CD4-positive, alpha-beta memory T cell (primary cell): ENCODE measurements at regions of chr12 and their contacts with region 1.

Region 1: GRCh38 chr12:122860346-122861090 is 25.3 kb downstream of the HIP1R start:
- DNase-seq: peak; percentile 68 to 79 (median 73)
- H3K4me3 ChIP-seq: no peak overlapping the region
- H3K4me3 Mint-ChIP-seq: no peak overlapping the region
- H3K27ac ChIP-seq: no peak overlapping the region
- H3K27ac Mint-ChIP-seq: peak overlapping the region in 4 of 7 donors; percentile 10 to 71 (median 30)
- H3K4me1 ChIP-seq: peaks cover 5% of the 10 kb centered on the region
- H3K4me1 Mint-ChIP-seq: peaks cover 0 to 5% (median 0%) of the 10 kb centered on the region in 4 donors
- H3K27me3 ChIP-seq: no peaks in the 10 kb centered on the region
- H3K27me3 Mint-ChIP-seq: no peaks in the 10 kb centered on the region

Region 2: GRCh38 chr12:122793685-122794106 is 66.8 kb before region 1 on chr12:
- CTCF ChIA-PET with region 1: interaction called, 51 read pairs
- POLR2A ChIA-PET with region 1: interaction called, 8 read pairs
- intact Hi-C with region 1: loop called (anchors 1 kb)
- DNase-seq: peak in 4 of 5 donors; percentile 55 to 60 (median 58)
- H3K4me3 ChIP-seq: no peak overlapping the region
- H3K4me3 Mint-ChIP-seq: peak overlapping the region in 1 of 8 donors; percentile 29
- H3K27ac ChIP-seq: no peak overlapping the region
- H3K27ac Mint-ChIP-seq: no peak overlapping the region
- H3K4me1 ChIP-seq: peaks cover 3% of the 10 kb centered on the region
- H3K4me1 Mint-ChIP-seq: peaks cover 0 to 5% (median 4%) of the 10 kb centered on the region in 4 donors
- H3K27me3 ChIP-seq: no peaks in the 10 kb centered on the region
- H3K27me3 Mint-ChIP-seq: no peaks in the 10 kb centered on the region

Region 3: GRCh38 chr12:122834104-122834920 is 26.2 kb before region 1 on chr12:
- CTCF ChIA-PET with region 1: interaction called, 4 read pairs
- POLR2A ChIA-PET with region 1: interaction called, 9 read pairs
- intact Hi-C with region 1: loop called (anchors 2 kb)
- DNase-seq: peak in 4 of 5 donors; percentile 21 to 31 (median 26)
- H3K4me3 ChIP-seq: peak overlapping the region; percentile 23 to 63
- H3K4me3 Mint-ChIP-seq: peak overlapping the region; percentile 91 to 96 (median 94)
- H3K27ac ChIP-seq: no peak overlapping the region
- H3K27ac Mint-ChIP-seq: peak overlapping the region; percentile 84 to 97 (median 93)
- H3K4me1 ChIP-seq: peaks cover 30% of the 10 kb centered on the region
- H3K4me1 Mint-ChIP-seq: peaks cover 24 to 45% (median 38%) of the 10 kb centered on the region in 4 donors
- H3K27me3 ChIP-seq: no peaks in the 10 kb centered on the region
- H3K27me3 Mint-ChIP-seq: no peaks in the 10 kb centered on the region

Region 4: DNA sequence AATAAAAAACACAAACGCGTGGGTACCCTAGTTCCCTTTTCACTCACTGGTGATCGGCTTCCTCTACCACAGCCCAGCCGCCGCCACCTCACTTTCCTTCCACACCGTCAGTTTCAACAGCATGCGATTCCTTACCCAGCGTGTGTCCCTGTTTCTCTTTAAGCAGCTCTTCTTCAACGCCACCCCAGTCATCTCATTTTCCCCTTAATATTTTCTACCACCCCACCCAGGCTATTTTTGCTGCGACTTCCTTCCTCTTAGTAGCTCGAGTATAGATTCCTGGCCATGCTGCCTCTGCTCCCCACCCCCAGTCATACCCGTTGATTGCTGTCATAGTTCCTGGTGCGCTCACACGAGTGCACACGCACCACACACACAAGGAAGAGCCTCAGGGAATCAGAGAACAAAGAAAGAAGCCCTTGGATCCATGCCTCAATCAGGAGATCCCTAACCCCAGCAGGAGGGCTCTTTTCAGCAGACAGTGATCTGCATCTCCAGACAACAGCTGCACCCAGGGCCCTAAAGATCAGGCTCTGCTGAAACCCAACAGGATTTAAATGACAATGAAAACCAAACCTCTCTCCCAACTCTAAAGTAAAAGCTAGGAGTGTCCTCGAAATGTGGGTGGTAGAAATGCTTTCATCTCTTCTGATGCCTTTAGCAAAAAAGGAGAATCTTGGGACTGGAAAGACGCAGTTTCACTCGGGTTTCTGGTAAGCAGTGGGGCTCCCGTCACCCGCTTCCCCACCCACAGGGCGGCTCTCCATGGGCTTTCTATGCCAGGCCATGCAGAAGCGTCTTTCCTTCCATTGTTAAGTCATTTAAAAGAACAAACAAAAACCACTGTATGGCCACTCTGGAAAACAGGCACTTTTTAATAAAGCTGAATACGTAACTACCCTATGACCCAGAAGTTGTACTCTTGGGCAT is 11.6 kb after region 1 on chr12:
- CTCF ChIA-PET with region 1: interaction called, 72 read pairs
- POLR2A ChIA-PET with region 1: interaction called, 22 read pairs
- intact Hi-C with region 1: no loop called
- DNase-seq: peak in 3 of 5 donors; percentile 34 to 40 (median 39)
- H3K4me3 ChIP-seq: peak overlapping the region; percentile 25 to 41
- H3K4me3 Mint-ChIP-seq: peak overlapping the region; percentile 84 to 94 (median 91)
- H3K27ac ChIP-seq: peak overlapping the region; percentile 47
- H3K27ac Mint-ChIP-seq: peak overlapping the region; percentile 62 to 97 (median 94)
- H3K4me1 ChIP-seq: peaks cover 70% of the 10 kb centered on the region
- H3K4me1 Mint-ChIP-seq: peaks cover 48 to 82% (median 63%) of the 10 kb centered on the region in 4 donors
- H3K27me3 ChIP-seq: no peaks in the 10 kb centered on the region
- H3K27me3 Mint-ChIP-seq: no peaks in the 10 kb centered on the region

Region 5: DNA sequence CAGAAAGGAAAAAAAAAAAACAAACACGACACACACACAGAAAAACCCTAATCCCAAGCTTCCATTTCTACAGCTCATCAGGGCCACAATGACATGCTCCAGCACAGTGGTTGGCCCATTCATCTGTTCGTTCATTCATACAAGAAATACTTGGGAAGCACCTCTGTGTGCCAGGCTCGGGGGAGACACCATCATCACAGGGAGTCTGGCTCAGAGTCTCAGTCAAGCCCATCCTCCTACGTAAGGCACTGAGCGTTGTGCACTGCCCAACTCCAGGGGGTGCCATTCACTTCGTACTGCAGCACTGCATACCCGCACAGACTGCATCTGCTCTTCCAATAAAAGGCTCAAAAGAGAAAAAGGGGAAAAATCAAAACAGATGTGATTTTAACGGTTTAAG is 20.1 kb after region 1 on chr12:
- CTCF ChIA-PET with region 1: interaction called, 72 read pairs
- POLR2A ChIA-PET with region 1: interaction called, 5 read pairs
- intact Hi-C with region 1: no loop called
- DNase-seq: no peak
- H3K4me3 ChIP-seq: no peak overlapping the region
- H3K4me3 Mint-ChIP-seq: peak overlapping the region in 3 of 8 donors; percentile 11 to 27 (median 20)
- H3K27ac ChIP-seq: no peak overlapping the region
- H3K27ac Mint-ChIP-seq: peak overlapping the region; percentile 41 to 87 (median 80)
- H3K4me1 ChIP-seq: peaks cover 86% of the 10 kb centered on the region
- H3K4me1 Mint-ChIP-seq: peaks cover 51 to 94% (median 74%) of the 10 kb centered on the region in 4 donors
- H3K27me3 ChIP-seq: no peaks in the 10 kb centered on the region
- H3K27me3 Mint-ChIP-seq: no peaks in the 10 kb centered on the region

Region 6: DNA sequence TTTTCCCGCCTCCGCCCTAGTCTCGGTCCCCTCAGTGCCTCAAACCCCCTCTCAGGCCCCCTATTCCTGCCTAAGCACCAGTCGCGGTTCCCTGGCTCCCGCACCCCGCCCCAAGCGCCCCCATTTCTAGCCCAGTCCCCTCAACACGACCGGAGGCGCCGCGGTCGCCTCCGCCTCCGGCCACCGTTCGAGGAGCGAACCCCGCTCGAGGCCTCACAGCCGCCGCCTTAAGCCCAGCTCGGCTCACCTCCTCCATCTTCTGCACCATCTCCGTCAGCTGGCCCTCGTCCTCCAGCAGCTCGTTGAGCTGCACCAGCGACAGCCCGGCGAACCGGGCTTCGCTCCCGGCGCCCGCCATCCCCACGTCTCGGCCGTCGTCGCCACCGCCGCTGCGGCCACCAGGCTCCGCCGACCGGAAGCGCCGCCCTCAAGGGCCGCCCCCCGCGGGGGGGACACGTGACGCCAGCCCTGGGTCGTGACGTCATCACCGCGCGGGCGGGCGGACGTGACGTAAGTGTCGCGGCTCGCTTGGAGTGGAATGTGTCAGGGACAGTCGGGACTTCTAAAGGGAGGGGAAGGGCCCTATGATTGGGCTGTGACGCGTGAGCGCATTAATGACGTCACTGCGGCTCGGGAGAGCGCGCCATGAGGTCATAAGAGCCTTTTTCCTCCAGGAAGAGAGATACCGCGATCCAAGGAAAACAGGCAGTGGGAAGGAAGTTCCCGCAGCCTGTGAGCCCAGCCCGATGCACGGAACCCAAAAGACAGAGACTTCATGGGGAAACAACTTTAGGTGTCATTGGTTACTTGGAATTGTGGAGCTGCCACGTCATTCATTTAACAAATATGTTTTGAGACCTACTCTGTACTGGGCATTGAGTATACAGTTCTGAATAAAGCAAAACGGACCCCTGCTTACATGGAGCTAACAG is 35.5 kb after region 1 on chr12 and contains the start of gene VPS37B:
- CTCF ChIA-PET with region 1: interaction called, 34 read pairs
- POLR2A ChIA-PET with region 1: interaction called, 17 read pairs
- intact Hi-C with region 1: no loop called
- DNase-seq: peak; percentile 91 to 96 (median 93)
- H3K4me3 ChIP-seq: peak within 1 kb of the TSS; percentile 54 to 79
- H3K4me3 Mint-ChIP-seq: peak within 1 kb of the TSS; percentile 88 to 97 (median 92)
- H3K27ac ChIP-seq: peak within 1 kb of the TSS; percentile 86
- H3K27ac Mint-ChIP-seq: peak within 1 kb of the TSS; percentile 93 to 100 (median 100)
- H3K4me1 ChIP-seq: peaks cover 89% of the 10 kb centered on the region
- H3K4me1 Mint-ChIP-seq: peaks cover 60 to 92% (median 78%) of the 10 kb centered on the region in 4 donors
- H3K27me3 ChIP-seq: no peaks in the 10 kb centered on the region
- H3K27me3 Mint-ChIP-seq: no peaks in the 10 kb centered on the region
- total RNA-seq, gene VPS37B: 22.8 to 23.7 TPM

Region 7: DNA sequence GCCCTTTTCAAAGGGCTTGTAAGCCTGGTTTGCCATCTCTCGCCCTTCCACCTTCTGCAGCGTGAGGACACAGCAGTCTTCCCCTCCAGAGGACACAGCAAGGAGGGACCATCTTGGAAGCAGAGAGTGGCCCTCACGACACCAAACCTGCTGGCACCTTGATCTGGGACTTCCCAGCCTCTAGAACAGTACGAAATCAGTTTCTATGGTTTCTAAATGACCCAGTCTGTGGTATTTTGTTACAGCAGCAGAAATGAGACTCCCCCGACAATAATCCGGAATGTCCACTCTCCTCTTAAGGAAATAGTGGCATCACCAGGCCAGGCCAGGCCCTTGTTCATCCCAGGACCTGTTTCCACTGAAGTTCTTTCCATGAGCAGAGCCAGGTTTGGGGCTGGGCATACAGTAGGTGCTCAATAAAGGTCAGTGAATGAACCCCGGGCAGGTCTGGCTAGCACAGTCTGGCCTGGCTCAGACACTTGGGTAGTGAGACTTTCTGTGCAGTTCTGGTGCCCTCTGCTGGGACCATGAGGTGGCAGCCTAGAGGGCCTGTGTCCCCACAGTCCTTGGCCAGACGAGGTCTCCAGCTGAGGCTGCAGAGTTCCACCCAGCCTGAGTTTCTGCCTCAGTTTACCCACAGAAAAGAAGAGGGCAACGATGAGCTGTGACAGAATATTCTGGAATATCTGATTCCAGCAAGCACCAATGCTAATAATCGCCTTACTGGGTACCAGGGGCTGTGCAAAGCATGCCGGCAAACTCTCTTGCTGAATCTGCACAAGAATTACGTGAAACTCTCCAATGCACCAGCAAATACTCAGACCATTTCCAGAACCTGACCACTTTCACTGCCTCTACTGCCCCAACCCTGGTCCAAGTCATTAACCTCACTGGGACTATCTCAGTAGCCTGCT is 91.7 kb after region 1 on chr12:
- CTCF ChIA-PET with region 1: interaction called, 268 read pairs
- POLR2A ChIA-PET with region 1: interaction called, 3 read pairs
- intact Hi-C with region 1: loop called (anchors 1 kb)
- DNase-seq: peak; percentile 62 to 69 (median 65)
- H3K4me3 ChIP-seq: no peak overlapping the region
- H3K4me3 Mint-ChIP-seq: no peak overlapping the region
- H3K27ac ChIP-seq: no peak overlapping the region
- H3K27ac Mint-ChIP-seq: peak overlapping the region in 4 of 7 donors; percentile 7 to 37 (median 16)
- H3K4me1 ChIP-seq: peaks cover 6% of the 10 kb centered on the region
- H3K4me1 Mint-ChIP-seq: peaks cover 1 to 6% (median 3%) of the 10 kb centered on the region in 4 donors
- H3K27me3 ChIP-seq: no peaks in the 10 kb centered on the region
- H3K27me3 Mint-ChIP-seq: no peaks in the 10 kb centered on the region

Region 8: GRCh38 chr12:123364532-123365024 is 504.1 kb after region 1 on chr12 and contains the start of gene SBNO1:
- CTCF ChIA-PET with region 1: no interaction called
- POLR2A ChIA-PET with region 1: no interaction called
- intact Hi-C with region 1: no loop called
- DNase-seq: peak in 4 of 5 donors; percentile 92 to 94 (median 93)
- H3K4me3 ChIP-seq: peak within 1 kb of the TSS; percentile 92 to 94
- H3K4me3 Mint-ChIP-seq: peak within 1 kb of the TSS; percentile 85 to 98 (median 94)
- H3K27ac ChIP-seq: peak within 1 kb of the TSS; percentile 85
- H3K27ac Mint-ChIP-seq: peak within 1 kb of the TSS; percentile 89 to 99 (median 97)
- H3K4me1 ChIP-seq: peaks cover 39% of the 10 kb centered on the region
- H3K4me1 Mint-ChIP-seq: peaks cover 10 to 32% (median 18%) of the 10 kb centered on the region in 4 donors
- H3K27me3 ChIP-seq: no peaks in the 10 kb centered on the region
- H3K27me3 Mint-ChIP-seq: no peaks in the 10 kb centered on the region
- total RNA-seq, gene SBNO1: 54.1 to 56.3 TPM